ENCODE measurements at regions of chr2 and their contacts with region 1.

Region 1: DNA sequence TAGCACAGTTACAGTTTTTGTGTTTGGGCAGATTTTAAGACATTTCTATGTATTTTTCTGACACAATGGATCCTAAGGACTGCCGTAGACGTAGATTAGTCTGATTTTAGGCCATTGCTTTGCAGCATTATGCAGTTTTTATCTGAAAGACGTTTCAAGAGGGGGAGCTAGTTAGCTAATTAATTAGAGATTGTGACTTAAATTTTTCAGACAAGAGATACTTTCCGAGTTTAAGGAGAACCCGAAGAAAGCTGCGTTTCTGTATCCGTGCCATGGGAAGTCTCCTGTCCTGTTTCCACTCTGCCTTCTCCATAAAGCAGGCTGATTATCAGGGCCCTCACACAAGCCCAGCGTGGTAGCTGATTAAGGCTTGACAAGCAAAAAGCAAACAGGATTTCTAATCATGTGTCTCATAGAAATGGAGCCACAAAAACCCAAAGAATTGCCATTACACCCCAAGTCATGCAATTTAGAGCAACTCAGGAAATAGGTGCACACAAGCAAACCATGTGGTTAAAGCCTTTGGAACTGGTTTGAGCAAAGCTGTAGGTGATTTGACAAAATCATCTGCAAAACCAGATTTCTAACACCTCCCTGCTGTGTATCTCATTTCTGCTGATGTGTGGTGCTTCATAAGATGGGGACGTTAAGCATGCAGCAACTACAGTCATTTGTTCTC is 808.1 kb downstream of the RNF144A start:
- DNase-seq: peak; percentile 88
- H3K4me3 Mint-ChIP-seq: peak overlapping the region; percentile 87
- H3K27ac Mint-ChIP-seq: peak overlapping the region; percentile 92
- H3K4me1 Mint-ChIP-seq: peaks cover 53% of the 10 kb centered on the region
- H3K27me3 Mint-ChIP-seq: no peaks in the 10 kb centered on the region

Region 2: GRCh38 chr2:7450188-7450832 is 275.0 kb before region 1 on chr2:
- intact Hi-C with region 1: loop called (anchors 5 kb)
- DNase-seq: peak; percentile 90
- H3K4me3 Mint-ChIP-seq: peak overlapping the region; percentile 58
- H3K27ac Mint-ChIP-seq: peak overlapping the region; percentile 100
- H3K4me1 Mint-ChIP-seq: peaks cover 70% of the 10 kb centered on the region
- H3K27me3 Mint-ChIP-seq: no peaks in the 10 kb centered on the region

Region 3: DNA sequence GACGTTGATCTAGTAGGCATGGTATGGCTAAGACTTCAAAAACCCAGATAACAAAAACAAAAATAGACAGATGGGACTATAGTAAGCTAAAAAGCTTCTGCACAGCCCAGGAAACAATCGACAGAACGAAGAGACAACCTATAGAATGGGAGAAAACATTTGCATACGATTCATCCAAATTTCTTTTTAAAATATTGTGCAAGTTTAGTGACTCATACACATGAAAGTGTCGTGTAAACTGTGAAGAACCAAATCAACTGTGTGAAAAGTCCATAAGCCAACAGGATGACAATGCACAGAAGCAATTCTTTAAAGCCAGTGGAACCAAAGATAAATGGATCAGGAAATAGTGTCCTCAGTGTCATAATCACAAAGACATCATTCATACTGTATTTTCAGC is 137.0 kb before region 1 on chr2:
- intact Hi-C with region 1: loop called (anchors 5 kb)
- DNase-seq: peak; percentile 50
- H3K4me3 Mint-ChIP-seq: peak overlapping the region; percentile 2
- H3K27ac Mint-ChIP-seq: peak overlapping the region; percentile 68
- H3K4me1 Mint-ChIP-seq: peaks cover 22% of the 10 kb centered on the region
- H3K27me3 Mint-ChIP-seq: no peaks in the 10 kb centered on the region

Region 4: DNA sequence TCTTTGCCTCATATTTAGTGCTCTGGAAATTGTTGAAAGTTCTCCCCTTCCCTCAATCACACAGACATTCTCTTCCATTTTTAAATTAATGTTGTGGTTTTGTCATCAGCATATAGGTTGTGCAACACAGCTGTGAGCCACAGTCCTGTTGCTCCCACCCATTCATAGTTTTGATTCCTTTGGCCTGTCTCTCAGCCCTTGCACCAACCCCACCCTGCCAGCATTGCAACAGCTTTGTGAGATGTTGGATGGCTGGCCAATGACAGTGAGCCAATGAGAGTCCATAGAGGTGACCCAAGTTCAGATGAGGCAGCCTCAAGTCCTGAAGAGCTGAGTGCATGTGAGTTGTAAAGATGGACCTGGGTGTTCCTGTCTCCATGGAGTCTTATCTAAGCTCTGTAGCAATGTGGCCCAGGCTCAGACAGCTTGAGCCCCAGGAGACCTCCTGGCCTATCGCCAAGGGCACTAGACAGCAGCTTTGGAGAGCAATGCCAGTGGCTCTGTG is 32.6 kb before region 1 on chr2:
- intact Hi-C with region 1: loop called (anchors 5 kb)
- DNase-seq: no peak
- H3K4me3 Mint-ChIP-seq: peak overlapping the region; percentile 68
- H3K27ac Mint-ChIP-seq: peak overlapping the region; percentile 91
- H3K4me1 Mint-ChIP-seq: peaks cover 42% of the 10 kb centered on the region
- H3K27me3 Mint-ChIP-seq: no peaks in the 10 kb centered on the region

Region 5: DNA sequence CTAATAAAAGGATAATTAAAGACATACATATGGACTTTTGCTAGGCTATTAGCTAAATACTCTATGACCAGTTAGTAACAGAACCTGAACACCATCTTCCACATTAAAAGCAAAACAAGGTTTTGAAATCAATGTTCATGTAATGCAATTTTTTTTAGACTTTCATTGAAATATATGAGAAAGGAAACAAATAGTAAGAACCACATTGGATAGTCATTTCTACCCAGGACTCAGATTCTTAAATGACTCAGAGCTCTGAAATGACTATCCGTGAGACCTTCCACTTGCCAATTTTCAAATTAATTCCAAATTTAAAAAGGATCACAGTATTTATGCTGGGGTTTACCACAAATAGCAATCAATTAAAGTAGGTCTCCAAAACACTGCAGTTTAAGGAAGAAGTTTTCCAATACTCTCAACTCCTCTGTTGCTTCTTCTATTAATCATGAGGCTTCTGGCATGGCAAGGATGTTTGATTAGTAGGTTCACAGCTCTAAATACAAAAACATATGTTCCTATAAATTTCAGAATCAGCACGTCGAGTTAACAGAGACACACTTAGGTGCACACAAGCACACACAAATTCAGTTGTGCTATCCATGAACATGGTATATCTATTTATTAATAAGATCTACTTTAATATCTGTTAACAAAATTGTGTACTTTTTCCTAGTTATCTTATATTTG is 32.9 kb after region 1 on chr2:
- intact Hi-C with region 1: loop called (anchors 1 kb)
- DNase-seq: peak; percentile 43
- H3K4me3 Mint-ChIP-seq: peak overlapping the region; percentile 15
- H3K27ac Mint-ChIP-seq: peak overlapping the region; percentile 82
- H3K4me1 Mint-ChIP-seq: peaks cover 16% of the 10 kb centered on the region
- H3K27me3 Mint-ChIP-seq: no peaks in the 10 kb centered on the region

Region 6: DNA sequence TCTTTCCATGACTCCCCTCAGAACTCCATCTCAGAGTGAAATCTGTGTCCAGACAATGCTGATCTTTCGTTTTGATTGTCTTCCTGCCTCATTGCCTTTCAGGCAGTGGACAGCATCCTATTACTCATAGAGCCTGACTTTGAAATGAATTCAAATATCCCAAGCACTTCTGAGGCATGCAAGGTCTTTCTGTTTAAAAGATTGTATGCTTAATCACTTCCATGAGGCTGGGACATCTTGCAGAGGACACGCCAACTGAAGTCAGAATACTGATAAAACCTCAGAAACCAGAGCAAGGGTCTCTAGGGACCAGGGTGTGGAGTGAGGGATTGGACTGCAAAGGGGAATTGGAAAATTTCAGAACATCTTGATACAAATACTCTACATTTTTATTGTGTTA is 120.0 kb after region 1 on chr2:
- intact Hi-C with region 1: loop called (anchors 1 kb)
- DNase-seq: peak; percentile 52
- H3K4me3 Mint-ChIP-seq: no peak overlapping the region
- H3K27ac Mint-ChIP-seq: peak overlapping the region; percentile 76
- H3K4me1 Mint-ChIP-seq: peaks cover 42% of the 10 kb centered on the region
- H3K27me3 Mint-ChIP-seq: no peaks in the 10 kb centered on the region

Region 7: GRCh38 chr2:8303322-8303832 is 578.1 kb after region 1 on chr2:
- intact Hi-C with region 1: no loop called
- DNase-seq: peak; percentile 94
- H3K4me3 Mint-ChIP-seq: peak overlapping the region; percentile 71
- H3K27ac Mint-ChIP-seq: peak overlapping the region; percentile 83
- H3K4me1 Mint-ChIP-seq: peaks cover 72% of the 10 kb centered on the region
- H3K27me3 Mint-ChIP-seq: no peaks in the 10 kb centered on the region